ENCODE measurements at regions of chr3 and their contacts with region 1.

Region 1: DNA sequence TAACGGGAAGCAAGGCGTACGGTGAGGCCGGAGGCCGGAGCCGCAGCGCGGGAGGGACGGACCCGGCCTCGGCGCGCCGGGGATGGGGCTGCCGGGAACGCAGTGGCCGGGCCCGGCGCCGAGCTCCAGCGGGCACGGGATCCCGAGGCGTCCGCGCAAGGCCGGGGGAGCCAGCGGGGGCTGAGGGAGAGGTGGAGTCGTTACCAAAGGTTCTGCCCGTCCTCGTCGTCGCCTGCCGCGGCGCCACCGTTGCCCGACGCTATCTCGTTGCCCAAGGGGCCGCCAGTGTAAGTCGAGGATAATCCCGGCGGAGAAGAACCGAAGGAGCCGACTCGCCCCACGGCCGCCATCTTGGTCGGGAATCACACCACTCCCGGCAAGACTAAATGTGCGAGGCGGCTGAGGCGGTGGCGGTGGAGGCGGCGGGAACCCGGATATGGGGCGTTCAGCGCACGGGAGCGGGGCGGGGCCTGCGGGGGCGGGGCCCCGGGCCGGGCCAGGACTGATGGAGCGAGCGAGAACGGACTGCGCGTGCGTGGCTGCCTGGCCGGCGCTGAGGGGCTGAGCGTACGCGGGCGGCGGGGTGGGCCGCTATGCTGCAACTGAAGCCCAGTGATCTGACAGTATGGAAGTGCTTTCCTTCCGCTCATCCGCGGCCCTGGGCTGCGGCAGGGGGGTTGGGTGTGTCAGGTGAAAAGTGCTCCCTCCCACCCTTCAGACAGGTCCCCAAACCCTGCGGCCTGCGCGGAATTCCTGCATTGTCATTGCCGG is at the start of gene DYNC1LI1:
- DNase-seq: peak; percentile 95 to 98
- ATAC-seq: peak; percentile 98 to 99 (median 98)
- H3K4me3 ChIP-seq: peak within 1 kb of the TSS; percentile 77 to 98 (median 94)
- H3K27ac ChIP-seq: peak within 1 kb of the TSS; percentile 97 to 100 (median 99)
- H3K4me1 ChIP-seq: peaks cover 0 to 62% (median 34%) of the 10 kb centered on the region in 9 donors
- H3K27me3 ChIP-seq: no peaks in the 10 kb centered on the region
- CTCF ChIP-seq: no peak
- total RNA-seq, gene DYNC1LI1: 42.6 to 69.9 (median 54.0) TPM

Region 2: DNA sequence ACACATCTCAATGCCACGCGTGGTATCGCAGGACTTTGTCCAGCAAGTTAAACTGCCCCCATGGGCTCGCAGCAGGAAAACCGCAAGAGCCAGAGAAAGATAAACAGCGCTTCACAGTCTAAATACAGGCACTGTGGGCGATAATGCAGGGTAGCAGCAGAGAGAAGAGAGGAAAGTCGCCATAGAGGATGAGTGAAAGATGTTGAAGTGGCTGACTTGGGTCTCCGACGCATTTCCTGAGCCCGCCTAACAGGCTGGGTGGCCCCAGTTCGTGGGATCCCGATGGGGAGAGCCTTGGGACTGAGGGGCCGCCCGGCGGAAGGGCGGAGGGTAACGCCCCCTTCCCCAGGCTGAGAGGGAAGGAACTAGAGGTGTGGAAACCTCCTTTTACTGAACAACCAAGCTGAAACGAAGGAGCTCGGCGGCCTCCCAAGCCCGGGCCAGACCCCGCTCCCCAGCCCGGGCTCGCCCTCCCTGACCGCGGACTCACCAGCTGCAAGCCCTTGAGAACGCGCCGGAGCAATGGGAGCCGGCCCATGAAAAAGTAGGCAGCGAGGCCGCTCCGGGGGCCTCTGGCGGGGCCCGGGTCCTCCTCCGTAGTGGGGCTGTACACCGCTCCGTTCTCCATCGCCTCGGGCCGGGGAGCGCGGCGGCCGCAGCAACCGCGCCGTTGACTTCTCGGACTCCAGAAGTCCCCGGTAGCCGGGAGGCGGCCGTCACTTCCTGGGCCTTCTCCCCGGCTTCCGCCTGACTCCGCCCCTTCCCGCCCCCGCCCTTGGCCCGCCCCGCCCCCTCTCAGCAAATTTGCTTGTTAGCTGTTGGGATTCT is 68.3 kb before region 1 on chr3 and contains the start of gene CMTM6:
- intact Hi-C with region 1: loop called in 3 of 10 experiments (anchors 10 kb)
- DNase-seq: peak; percentile 81 to 83
- ATAC-seq: peak; percentile 94 to 97 (median 96)
- H3K4me3 ChIP-seq: peak within 1 kb of the TSS; percentile 61 to 97 (median 84)
- H3K27ac ChIP-seq: peak within 1 kb of the TSS; percentile 75 to 99 (median 96)
- H3K4me1 ChIP-seq: peaks cover 0 to 48% (median 19%) of the 10 kb centered on the region in 9 donors
- H3K27me3 ChIP-seq: no peaks in the 10 kb centered on the region
- CTCF ChIP-seq: no peak
- total RNA-seq, gene CMTM6: 8.5 to 23.8 (median 11.6) TPM

Region 3: GRCh38 chr3:32667122-32667521 is 96.5 kb after region 1 on chr3:
- intact Hi-C with region 1: loop called in 1 of 10 experiments (anchors 10 kb)
- DNase-seq: no peak
- ATAC-seq: no peak
- H3K4me3 ChIP-seq: no peak overlapping the region
- H3K27ac ChIP-seq: no peak overlapping the region
- H3K4me1 ChIP-seq: no peaks in the 10 kb centered on the region
- H3K27me3 ChIP-seq: peaks cover 0 to 6% (median 0%) of the 10 kb centered on the region in 7 donors
- CTCF ChIP-seq: no peak

Region 4: DNA sequence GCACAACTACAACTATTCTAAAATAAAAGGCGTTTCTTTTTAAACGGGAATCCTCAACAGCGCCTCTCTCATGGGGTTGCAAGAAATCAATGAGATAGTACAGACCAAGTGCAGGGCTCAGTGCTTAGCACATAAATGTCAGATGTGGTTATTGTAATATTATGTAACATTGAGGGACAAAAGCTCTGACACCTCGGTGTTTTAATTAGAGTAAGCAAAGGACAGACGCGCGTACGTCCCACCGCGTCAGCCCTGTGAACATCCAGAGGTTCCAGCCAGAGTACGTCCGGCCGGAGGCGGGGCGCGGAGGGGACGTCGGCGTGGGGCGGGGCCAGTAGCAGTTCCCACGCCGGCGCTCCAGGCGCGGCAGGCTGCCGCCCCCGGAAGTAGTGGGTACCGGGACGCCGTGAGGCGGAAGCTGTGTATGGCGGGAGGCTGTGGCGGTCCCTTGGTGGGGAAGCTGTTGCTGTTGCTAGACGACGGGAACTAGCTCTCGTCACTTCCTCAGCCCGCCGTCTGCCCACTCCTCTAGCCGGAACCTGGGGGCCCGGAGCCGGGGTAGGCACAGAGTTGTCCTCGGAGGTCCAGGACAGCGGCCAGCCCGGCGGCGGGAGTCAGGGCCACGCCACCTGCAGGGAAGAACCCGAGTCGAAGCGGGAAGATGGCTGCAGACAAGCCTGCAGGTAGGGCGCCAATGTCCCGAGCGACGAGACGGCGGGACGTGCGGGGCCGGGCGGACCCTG is 114.4 kb after region 1 on chr3 and contains the start of gene CNOT10:
- intact Hi-C with region 1: loop called in 1 of 10 experiments (anchors 2 kb)
- DNase-seq: peak; percentile 93 to 95
- ATAC-seq: peak; percentile 99 to 100 (median 100)
- H3K4me3 ChIP-seq: peak within 1 kb of the TSS; percentile 53 to 97 (median 88)
- H3K27ac ChIP-seq: peak within 1 kb of the TSS; percentile 60 to 91 (median 87)
- H3K4me1 ChIP-seq: peaks cover 0 to 26% (median 20%) of the 10 kb centered on the region in 9 donors
- H3K27me3 ChIP-seq: no peaks in the 10 kb centered on the region
- CTCF ChIP-seq: peak in 5 of 9 donors; percentile 8 to 50 (median 40)
- total RNA-seq, gene CNOT10: 13.6 to 23.9 (median 18.1) TPM

Region 5: GRCh38 chr3:32992322-32992692 is 421.7 kb after region 1 on chr3:
- intact Hi-C with region 1: no loop called
- DNase-seq: no peak
- ATAC-seq: no peak
- H3K4me3 ChIP-seq: no peak overlapping the region
- H3K27ac ChIP-seq: no peak overlapping the region
- H3K4me1 ChIP-seq: no peaks in the 10 kb centered on the region
- H3K27me3 ChIP-seq: no peaks in the 10 kb centered on the region
- CTCF ChIP-seq: no peak